Adrenal gland (tissue), 19 donors: ENCODE measurements at regions of chr21 and their contacts with region 1.

Region 1: GRCh38 chr21:35833991-35834390 is 226.3 kb downstream of the SETD4 start:
- DNase-seq: no peak
- H3K4me3 ChIP-seq: no peak overlapping the region
- H3K27ac ChIP-seq: no peak overlapping the region
- H3K4me1 ChIP-seq: no peaks in the 10 kb centered on the region
- H3K27me3 ChIP-seq: peaks cover 6% of the 10 kb centered on the region
- CTCF ChIP-seq: no peak
- POLR2A ChIP-seq: no peak

Region 2: DNA sequence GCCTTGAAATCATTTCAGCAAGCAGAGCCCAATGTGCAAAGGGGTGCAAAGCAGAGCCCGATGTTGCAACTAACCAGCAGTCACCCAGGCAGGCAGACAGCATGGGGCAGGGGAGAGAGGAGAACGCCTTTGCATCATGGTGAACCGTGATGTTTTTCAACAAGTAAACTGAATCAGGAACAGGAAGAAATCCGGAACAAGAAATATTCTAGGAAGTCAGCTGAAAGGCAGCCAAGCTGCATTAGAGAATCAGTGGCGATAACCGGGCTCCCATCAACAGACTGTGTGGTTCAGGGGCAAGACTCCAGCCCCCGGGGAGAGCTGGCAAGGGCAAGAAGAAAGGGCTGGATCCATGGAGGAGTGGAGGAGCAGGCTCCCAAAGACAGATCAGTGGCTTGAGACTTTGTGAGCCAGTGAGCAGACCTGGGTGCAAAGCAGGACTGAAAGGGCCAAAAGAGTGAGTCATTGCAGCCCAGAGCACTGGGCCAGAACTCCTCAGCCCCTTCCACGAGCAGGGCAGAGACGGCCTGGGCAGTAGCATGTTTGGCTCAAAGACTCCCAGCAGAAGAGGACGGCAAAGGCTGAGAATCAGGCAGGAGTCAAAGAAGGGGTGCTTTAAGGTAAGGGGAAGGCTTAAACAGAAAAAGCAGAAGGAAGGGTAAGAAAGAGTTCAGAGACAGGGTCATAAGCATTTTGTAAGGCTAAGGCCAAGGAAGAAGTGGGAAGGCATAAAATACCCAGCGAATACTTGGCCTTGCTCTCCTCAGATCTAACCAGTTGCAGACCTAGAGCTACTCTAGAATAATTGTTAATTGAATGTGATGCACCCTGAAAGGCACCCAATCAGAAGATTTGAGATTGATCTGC is 71.3 kb after region 1 on chr21:
- intact Hi-C with region 1: no loop called
- DNase-seq: peak in 4 of 7 donors; percentile 26 to 49 (median 43)
- H3K4me3 ChIP-seq: no peak overlapping the region
- H3K27ac ChIP-seq: peak overlapping the region in 2 of 5 donors; percentile 64 to 78
- H3K4me1 ChIP-seq: no peaks in the 10 kb centered on the region
- H3K27me3 ChIP-seq: no peaks in the 10 kb centered on the region
- CTCF ChIP-seq: no peak
- POLR2A ChIP-seq: no peak

Region 3: GRCh38 chr21:36028127-36029069 is 194.4 kb after region 1 on chr21:
- intact Hi-C with region 1: loop called in 1 of 2 experiments (anchors 10 kb)
- DNase-seq: peak; percentile 70 to 92 (median 81)
- H3K4me3 ChIP-seq: no peak overlapping the region
- H3K27ac ChIP-seq: no peak overlapping the region
- H3K4me1 ChIP-seq: peaks cover 2% of the 10 kb centered on the region in 2 donors
- H3K27me3 ChIP-seq: no peaks in the 10 kb centered on the region
- CTCF ChIP-seq: peak; percentile 84 to 93 (median 90)
- POLR2A ChIP-seq: no peak